ENCODE measurements at regions of chr1 and their contacts with region 1.

Region 1: DNA sequence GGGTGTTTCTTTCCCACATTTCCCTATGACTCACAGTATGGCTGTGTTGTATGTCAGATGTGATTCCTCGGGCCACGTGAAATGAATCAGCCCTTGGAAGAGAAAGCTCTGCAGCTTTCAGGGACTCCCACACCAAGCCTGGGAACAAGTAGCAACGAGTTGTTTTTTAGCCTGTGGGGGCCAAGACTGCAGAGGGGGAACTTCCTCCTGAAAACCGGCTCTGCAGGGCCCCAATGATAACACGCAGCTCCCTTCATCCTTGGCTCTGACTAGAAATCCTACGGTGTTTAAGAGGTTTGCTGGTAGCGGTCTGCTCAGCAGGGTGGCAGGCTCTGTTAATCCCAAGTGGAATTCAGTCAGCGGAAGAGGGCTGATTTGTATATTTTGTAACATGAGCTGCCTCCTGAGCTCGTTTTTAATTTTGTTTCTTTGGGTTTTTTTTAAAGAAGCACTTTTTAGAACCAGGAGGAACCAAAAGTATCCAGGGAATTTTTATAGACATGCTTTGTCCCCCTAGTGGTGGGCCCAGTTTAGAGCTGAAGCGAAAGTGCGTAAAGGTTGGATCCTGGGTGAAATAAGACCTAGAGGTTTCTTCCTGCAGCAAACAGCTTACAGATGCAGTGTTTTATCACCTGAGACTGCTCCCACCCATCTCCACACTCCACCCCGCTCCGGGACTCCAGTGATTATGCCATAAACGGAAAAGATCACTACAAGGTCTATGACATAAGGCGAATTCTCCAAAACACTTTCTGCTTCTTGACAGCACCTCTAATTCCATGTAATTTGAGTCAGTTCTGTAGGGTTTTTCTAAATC is 48.8 kb downstream of the LAMC2 start:
- DNase-seq: peak; percentile 56
- ATAC-seq: peak; percentile 86
- H3K4me3 Mint-ChIP-seq: peak overlapping the region; percentile 48
- H3K27ac Mint-ChIP-seq: peak overlapping the region; percentile 88
- H3K4me1 Mint-ChIP-seq: peaks cover 38% of the 10 kb centered on the region
- H3K27me3 Mint-ChIP-seq: no peaks in the 10 kb centered on the region
- CTCF ChIP-seq: peak; percentile 69

Region 2: DNA sequence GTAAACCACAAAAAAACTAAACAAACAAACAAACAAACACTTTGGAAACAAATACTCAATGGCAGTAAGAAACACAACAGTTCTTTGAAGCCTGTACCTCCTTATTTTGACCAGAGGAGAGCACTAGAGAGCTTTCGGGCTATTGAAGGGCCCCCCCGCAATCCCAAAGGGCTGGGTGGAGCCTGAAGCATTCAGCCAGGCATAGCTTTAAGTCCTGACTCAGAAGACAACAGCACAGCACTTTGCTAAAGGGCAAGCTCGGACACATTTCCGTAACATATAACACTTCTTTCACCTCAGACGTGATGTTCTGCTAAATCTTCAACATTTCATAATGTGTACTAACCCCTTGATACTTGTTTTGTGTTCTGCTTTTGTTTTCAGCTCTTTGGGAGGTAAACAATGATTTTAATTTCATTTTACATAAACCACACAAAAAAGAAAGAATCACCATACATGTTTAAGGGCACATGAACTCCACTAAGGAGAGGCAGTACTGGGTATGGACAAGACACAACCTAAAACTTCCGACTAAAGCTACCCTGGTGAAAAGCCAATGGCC is 272.2 kb before region 1 on chr1:
- CTCF ChIA-PET with region 1: interaction called, 29 read pairs
- POLR2A ChIA-PET with region 1: no interaction called
- DNase-seq: peak; percentile 69
- ATAC-seq: peak; percentile 87
- H3K4me3 Mint-ChIP-seq: peak overlapping the region; percentile 5; the same call in 1 of the 2 replicates
- H3K27ac Mint-ChIP-seq: peak overlapping the region; percentile 84
- H3K4me1 Mint-ChIP-seq: peaks cover 34% of the 10 kb centered on the region
- H3K27me3 Mint-ChIP-seq: peaks cover 12% of the 10 kb centered on the region
- CTCF ChIP-seq: peak; percentile 64

Region 3: GRCh38 chr1:183144752-183145151 is 90.1 kb before region 1 on chr1:
- CTCF ChIA-PET with region 1: interaction called, 10 read pairs
- POLR2A ChIA-PET with region 1: no interaction called
- DNase-seq: no peak
- ATAC-seq: no peak; the same call in 1 of the 2 replicates
- H3K4me3 Mint-ChIP-seq: no peak overlapping the region
- H3K27ac Mint-ChIP-seq: no peak overlapping the region
- H3K4me1 Mint-ChIP-seq: no peaks in the 10 kb centered on the region
- H3K27me3 Mint-ChIP-seq: no peaks in the 10 kb centered on the region
- CTCF ChIP-seq: no peak

Region 4: GRCh38 chr1:183218971-183219615 is 15.8 kb before region 1 on chr1:
- CTCF ChIA-PET with region 1: interaction called, 20 read pairs
- POLR2A ChIA-PET with region 1: no interaction called
- DNase-seq: no peak
- ATAC-seq: peak; percentile 90
- H3K4me3 Mint-ChIP-seq: no peak overlapping the region
- H3K27ac Mint-ChIP-seq: no peak overlapping the region
- H3K4me1 Mint-ChIP-seq: peaks cover 26% of the 10 kb centered on the region
- H3K27me3 Mint-ChIP-seq: no peaks in the 10 kb centered on the region
- CTCF ChIP-seq: no peak

Region 5: GRCh38 chr1:183246436-183246835 is 11.6 kb after region 1 on chr1:
- CTCF ChIA-PET with region 1: interaction called, 24 read pairs
- POLR2A ChIA-PET with region 1: interaction called, 3 read pairs
- DNase-seq: no peak
- ATAC-seq: no peak
- H3K4me3 Mint-ChIP-seq: no peak overlapping the region
- H3K27ac Mint-ChIP-seq: no peak overlapping the region
- H3K4me1 Mint-ChIP-seq: peaks cover 11% of the 10 kb centered on the region
- H3K27me3 Mint-ChIP-seq: no peaks in the 10 kb centered on the region
- CTCF ChIP-seq: no peak

Region 6: GRCh38 chr1:183259886-183260285 is 25.0 kb after region 1 on chr1:
- CTCF ChIA-PET with region 1: interaction called, 11 read pairs
- POLR2A ChIA-PET with region 1: no interaction called
- DNase-seq: no peak
- ATAC-seq: peak; percentile 91
- H3K4me3 Mint-ChIP-seq: no peak overlapping the region
- H3K27ac Mint-ChIP-seq: peak overlapping the region; percentile 63; the same call in 1 of the 2 replicates
- H3K4me1 Mint-ChIP-seq: peaks cover 25% of the 10 kb centered on the region
- H3K27me3 Mint-ChIP-seq: 0 out of 2 replicates have a peak, but pooled peaks cover 3% of the 10 kb centered on the region
- CTCF ChIP-seq: no peak

Region 7: DNA sequence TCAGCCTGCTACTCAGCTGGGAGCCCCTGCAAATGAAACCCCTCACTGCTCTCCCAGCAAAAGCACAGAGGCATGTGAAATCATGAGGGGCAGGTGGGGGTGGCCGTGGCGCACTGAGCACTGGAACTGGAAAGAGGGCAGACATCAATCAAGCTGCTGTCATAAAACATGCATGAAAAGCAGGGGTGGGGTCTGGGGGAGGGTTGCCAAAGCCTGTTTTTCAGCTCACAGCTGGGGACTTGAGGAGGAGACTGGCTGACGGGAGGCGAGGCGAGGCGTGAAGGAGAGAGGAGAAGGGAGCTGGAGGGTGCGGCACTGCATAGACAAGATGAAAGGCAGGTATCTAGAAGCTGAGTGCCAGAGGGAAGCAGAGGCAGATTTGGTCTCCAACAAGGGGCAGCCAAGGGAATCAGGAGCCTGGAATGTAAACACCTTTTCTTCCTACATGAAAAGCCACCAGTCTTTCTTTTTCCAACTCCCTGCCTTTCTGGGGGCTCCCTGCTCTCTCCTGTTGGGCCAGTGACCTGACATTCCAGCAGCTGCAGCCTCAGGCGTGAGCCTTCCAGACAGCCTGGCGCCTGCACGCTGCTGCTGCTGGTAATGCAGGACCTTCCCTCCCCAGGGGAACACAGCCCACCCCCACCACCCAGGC is 96.3 kb after region 1 on chr1:
- CTCF ChIA-PET with region 1: no interaction called
- POLR2A ChIA-PET with region 1: no interaction called
- DNase-seq: peak; percentile 53
- ATAC-seq: peak; percentile 81
- H3K4me3 Mint-ChIP-seq: peak overlapping the region; percentile 45
- H3K27ac Mint-ChIP-seq: peak overlapping the region; percentile 90
- H3K4me1 Mint-ChIP-seq: peaks cover 52% of the 10 kb centered on the region
- H3K27me3 Mint-ChIP-seq: no peaks in the 10 kb centered on the region
- CTCF ChIP-seq: no peak

Measured in WTC11 (cell line).